ENCODE measurements at regions of chrX and their contacts with region 1.

Region 1: DNA sequence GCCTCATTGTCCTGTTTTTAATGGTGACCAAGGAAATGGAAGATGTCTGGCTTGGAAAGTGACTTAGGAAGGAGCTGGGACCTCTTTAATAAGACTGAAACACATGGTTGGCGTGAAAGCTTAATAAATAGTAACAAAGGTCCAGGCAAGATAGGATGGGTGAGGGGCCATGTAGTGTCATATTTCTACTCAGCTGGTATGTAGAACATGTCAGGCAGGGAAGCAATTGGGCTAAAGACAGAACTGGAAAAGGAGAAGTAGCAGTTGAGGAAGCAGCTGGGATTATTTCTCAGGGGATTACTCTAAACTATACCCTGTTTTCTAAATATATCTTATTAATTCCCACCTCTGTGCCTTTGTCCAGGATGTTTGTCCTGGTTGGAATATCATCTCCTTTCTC is 18.6 kb downstream of the ITGB1BP2 start:
- DNase-seq: no peak
- H3K4me3 ChIP-seq: no peak overlapping the region
- H3K27ac ChIP-seq: no peak overlapping the region
- H3K4me1 ChIP-seq: no peaks in the 10 kb centered on the region
- H3K27me3 ChIP-seq: no peaks in the 10 kb centered on the region
- CTCF ChIP-seq: no peak

Region 2: GRCh38 chrX:70921709-70922352 is 398.3 kb before region 1 on chrX:
- CTCF ChIA-PET with region 1: no interaction called
- dilution Hi-C with region 1: no loop called
- in situ Hi-C with region 1: no loop called
- intact Hi-C with region 1: no loop called
- DNase-seq: no peak
- H3K4me3 ChIP-seq: no peak overlapping the region
- H3K27ac ChIP-seq: no peak overlapping the region
- H3K4me1 ChIP-seq: no peaks in the 10 kb centered on the region
- H3K27me3 ChIP-seq: no peaks in the 10 kb centered on the region
- CTCF ChIP-seq: no peak

Region 3: DNA sequence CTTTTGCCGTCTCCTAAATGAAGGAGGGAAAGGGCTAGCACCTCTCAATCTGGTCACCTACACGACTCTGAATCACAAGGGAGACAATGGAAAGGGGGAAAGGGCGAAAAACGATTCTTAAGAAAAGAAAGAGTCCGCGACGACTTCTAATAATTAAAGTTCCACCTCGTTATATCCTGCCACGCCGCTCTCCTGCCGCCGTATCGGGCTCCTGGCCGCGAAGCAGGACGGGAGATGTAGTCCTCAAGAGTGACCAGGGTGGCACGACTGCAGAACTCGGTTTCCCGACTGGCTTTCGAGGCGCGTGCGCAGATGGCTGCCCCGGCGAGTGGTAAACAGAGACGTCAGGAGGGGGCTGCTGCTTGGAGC is 224.6 kb before region 1 on chrX and contains the start of gene FOXO4:
- CTCF ChIA-PET with region 1: no interaction called
- dilution Hi-C with region 1: no loop called
- in situ Hi-C with region 1: no loop called
- intact Hi-C with region 1: no loop called
- DNase-seq: peak; percentile 69
- H3K4me3 ChIP-seq: peak within 1 kb of the TSS; percentile 40 to 59 (median 57)
- H3K27ac ChIP-seq: no peak within 1 kb of the TSS
- H3K4me1 ChIP-seq: peaks cover 5% of the 10 kb centered on the region
- H3K27me3 ChIP-seq: no peaks in the 10 kb centered on the region
- CTCF ChIP-seq: no peak
- total RNA-seq, gene FOXO4: 5.9 to 13.8 TPM

Region 4: GRCh38 chrX:71177342-71177741 is 142.8 kb before region 1 on chrX:
- CTCF ChIA-PET with region 1: no interaction called
- dilution Hi-C with region 1: no loop called
- in situ Hi-C with region 1: no loop called
- intact Hi-C with region 1: no loop called
- DNase-seq: no peak
- H3K4me3 ChIP-seq: no peak overlapping the region
- H3K27ac ChIP-seq: no peak overlapping the region
- H3K4me1 ChIP-seq: no peaks in the 10 kb centered on the region
- H3K27me3 ChIP-seq: no peaks in the 10 kb centered on the region
- CTCF ChIP-seq: no peak

Region 5: DNA sequence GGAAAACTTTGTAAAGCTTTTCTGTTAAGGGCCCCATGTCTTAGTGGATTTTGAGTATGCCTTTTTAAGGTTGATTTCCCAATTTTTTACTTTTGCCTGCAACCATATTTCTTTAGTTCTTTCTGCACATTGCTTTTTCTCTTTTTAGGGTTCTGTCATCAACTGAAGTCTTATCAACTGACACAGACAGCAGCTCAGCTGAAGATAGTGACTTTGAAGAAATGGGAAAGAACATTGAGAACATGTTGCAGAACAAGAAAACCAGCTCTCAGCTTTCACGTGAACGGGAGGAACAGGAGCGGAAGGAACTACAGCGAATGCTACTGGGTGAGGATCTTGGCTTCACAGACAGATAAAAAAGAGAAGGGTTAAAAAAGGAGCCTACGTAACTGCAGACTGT is 73.8 kb after region 1 on chrX:
- CTCF ChIA-PET with region 1: no interaction called
- dilution Hi-C with region 1: loop called (anchors 5 kb)
- in situ Hi-C with region 1: no loop called
- intact Hi-C with region 1: no loop called
- DNase-seq: no peak
- H3K4me3 ChIP-seq: no peak overlapping the region
- H3K27ac ChIP-seq: no peak overlapping the region
- H3K4me1 ChIP-seq: no peaks in the 10 kb centered on the region
- H3K27me3 ChIP-seq: no peaks in the 10 kb centered on the region
- CTCF ChIP-seq: no peak

Measured in mammary epithelial cell (primary cell).